ENCODE measurements at regions of chr2 and their contacts with region 1.

Region 1: DNA sequence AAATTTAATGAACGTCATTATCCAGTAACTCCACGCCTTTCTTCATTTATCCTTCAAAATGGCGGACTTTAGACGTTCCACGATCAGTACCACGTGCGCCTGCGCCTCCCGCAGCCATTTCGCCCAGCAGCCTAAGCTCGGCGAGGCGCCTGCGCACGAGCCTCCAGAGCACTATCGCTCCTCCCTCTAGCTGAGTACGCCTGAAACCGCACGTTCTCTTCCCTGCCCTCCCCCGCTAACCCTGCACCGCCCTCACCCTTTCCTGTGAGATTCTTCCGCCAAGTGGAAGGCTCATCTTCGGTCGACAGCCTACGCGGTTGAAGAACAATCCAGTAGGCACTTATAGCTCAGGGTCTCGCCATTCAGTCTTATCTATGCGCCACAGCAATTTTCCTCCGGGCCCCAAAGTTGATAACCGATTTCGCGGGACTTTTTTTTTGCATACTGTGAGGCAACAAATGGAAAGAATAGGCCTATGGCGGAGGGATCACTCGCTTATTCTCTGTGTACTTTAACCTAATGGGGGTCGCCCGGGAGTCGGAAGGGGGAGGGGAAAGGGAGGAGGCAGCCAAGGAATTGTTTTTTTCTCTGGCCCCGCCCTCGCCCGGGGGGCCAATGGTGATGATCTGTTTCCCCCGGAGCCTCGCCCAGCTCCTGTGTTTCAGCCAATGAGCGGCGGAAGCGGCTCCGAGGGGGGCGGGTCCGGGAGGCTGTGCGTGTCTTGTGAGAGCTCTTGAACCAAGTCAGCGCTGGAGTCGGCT is at the start of gene KDM3A:
- DNase-seq: peak; percentile 99
- H3K4me3 ChIP-seq: peak within 1 kb of the TSS; percentile 76 to 88
- H3K27ac ChIP-seq: peak within 1 kb of the TSS; percentile 96 to 99
- H3K4me1 ChIP-seq: peaks cover 7% of the 10 kb centered on the region
- H3K27me3 ChIP-seq: no peaks in the 10 kb centered on the region
- CTCF ChIP-seq: peak in 1 of 4 experiments; percentile 22
- POLR2A ChIP-seq: no peak
- total RNA-seq, gene KDM3A: 24.6 to 56.6 TPM

Region 2: GRCh38 chr2:86413296-86414094 is 27.3 kb before region 1 on chr2:
- intact Hi-C with region 1: no loop called
- DNase-seq: no peak
- H3K4me3 ChIP-seq: no peak overlapping the region
- H3K27ac ChIP-seq: no peak overlapping the region
- H3K4me1 ChIP-seq: no peaks in the 10 kb centered on the region
- H3K27me3 ChIP-seq: no peaks in the 10 kb centered on the region
- CTCF ChIP-seq: no peak
- POLR2A ChIP-seq: no peak

Region 3: DNA sequence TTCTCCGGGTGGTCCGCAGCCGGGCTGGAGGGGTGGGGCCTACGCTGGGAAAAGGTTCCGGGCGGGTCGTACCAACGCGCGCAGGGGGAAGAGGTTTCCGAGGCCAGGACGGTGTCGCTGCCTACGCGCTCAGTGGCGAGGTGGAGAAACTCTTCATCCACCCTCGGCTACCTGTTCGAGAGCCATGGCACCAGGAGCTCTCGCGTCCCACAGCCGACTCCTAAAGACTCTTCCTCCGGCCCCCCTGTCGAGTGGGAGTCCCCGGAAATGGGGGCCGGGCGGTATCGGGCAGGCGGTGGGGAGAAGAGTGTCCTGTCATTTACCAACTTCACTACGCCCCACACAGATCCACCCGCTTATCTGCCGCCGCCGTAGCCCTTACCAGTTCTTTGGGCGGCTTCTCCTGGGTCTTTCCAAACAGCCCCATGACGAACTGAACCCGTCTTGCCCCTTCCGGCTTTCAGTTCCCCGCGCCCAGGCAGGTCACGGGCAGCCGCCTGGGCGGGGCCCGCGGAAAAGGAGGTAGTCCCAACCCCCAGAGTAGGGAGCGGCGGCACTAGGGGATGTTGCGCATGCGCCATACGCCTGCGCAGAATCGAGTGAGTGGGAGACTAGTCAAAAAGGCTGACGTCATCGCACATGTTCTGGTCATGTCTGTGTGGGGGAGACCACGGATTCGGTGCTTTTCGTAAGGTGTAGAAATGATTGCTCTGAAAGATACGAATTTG is 122.3 kb after region 1 on chr2 and contains the start of gene CHMP3:
- intact Hi-C with region 1: loop called (anchors 2 kb)
- DNase-seq: peak; percentile 94
- H3K4me3 ChIP-seq: peak within 1 kb of the TSS; percentile 68 to 83
- H3K27ac ChIP-seq: peak within 1 kb of the TSS; percentile 98 to 100
- H3K4me1 ChIP-seq: no peaks in the 10 kb centered on the region
- H3K27me3 ChIP-seq: no peaks in the 10 kb centered on the region
- CTCF ChIP-seq: no peak
- POLR2A ChIP-seq: peak; percentile 54
- total RNA-seq, gene CHMP3: 109 to 126 TPM

Region 4: DNA sequence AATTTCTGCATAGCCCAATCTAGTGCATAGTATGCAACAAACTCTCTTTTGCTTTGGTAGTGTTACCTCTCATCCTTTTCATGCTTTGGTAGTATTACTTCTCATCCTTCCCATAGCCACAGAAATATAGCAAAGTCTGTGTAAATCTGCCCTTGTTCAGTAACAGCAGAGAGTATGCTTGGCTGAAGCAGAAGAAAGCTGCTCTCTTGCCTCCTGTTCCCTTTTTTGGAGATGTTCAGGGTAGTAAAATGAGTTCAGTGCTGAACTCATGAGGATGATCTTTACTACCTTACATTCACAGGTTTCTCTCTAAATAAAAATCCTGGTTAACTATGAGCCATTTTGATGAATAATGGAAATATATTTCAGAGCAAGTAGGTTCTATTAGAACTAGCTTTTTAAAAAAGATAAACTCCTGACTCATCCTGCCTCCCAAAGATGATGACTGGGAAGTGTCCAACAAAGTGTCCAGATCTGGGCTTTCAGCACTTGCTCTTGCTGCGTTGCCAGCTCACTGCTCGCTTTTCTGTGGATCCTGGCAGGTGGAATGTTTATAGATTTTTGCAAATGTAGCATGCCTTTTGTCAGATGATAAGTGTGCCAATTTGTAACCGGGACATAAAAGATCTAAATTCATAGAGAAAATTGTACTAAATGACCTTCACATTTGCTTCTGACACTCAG is 151.9 kb after region 1 on chr2:
- intact Hi-C with region 1: loop called (anchors 10 kb)
- DNase-seq: no peak
- H3K4me3 ChIP-seq: no peak overlapping the region
- H3K27ac ChIP-seq: peak overlapping the region in 1 of 2 donors; percentile 24
- H3K4me1 ChIP-seq: no peaks in the 10 kb centered on the region
- H3K27me3 ChIP-seq: no peaks in the 10 kb centered on the region
- CTCF ChIP-seq: no peak
- POLR2A ChIP-seq: no peak

Region 5: DNA sequence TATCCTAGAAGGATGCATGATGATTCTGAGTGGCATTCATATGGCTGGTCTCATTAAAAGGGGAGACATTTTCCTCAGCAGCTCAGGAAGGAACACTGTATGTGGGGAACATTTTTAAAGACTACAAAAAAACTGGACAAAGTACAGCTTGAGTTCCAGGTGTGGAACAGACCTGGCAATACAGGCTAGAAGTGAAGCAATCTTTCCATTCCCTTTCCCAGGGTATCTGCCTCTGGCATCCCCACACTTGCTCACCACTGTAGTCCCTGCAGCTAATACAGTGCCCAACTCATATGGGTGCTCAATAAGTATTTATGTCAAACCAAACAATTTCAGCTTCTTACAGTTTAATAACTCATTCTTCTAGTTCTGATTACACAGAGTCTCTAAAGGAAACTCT is 174.8 kb after region 1 on chr2:
- intact Hi-C with region 1: no loop called
- DNase-seq: no peak
- H3K4me3 ChIP-seq: no peak overlapping the region
- H3K27ac ChIP-seq: no peak overlapping the region
- H3K4me1 ChIP-seq: no peaks in the 10 kb centered on the region
- H3K27me3 ChIP-seq: no peaks in the 10 kb centered on the region
- CTCF ChIP-seq: no peak
- POLR2A ChIP-seq: no peak